ENCODE measurements at regions of chrX and their contacts with region 1.

Region 1: DNA sequence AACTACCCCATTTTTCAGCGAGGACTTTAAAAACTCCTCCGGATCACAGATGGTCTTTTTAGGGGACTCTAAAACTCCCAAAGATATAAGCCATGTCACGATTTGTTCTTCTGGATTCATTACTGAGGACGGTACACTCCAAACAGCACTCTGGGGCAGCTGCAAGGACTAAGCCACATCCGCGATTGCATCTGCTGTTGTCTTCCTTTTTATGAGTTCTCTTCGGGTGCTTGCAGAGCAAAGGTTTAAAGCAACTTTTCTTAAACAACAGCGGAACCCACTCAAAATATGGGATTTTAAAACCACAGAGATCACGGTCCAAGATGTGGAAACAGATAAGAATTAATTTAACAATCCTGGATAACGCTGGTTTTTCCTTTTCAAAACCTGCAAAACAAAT is at the start of gene ARHGEF6:
- DNase-seq: peak; percentile 9
- H3K4me3 Mint-ChIP-seq: peak within 1 kb of the TSS; percentile 93
- H3K27ac Mint-ChIP-seq: peak within 1 kb of the TSS; percentile 95
- H3K4me1 Mint-ChIP-seq: peaks cover 64% of the 10 kb centered on the region
- H3K27me3 Mint-ChIP-seq: no peaks in the 10 kb centered on the region
- total RNA-seq, gene ARHGEF6: 39.8 and 40.8 TPM in 2 replicates

Region 2: GRCh38 chrX:136711147-136711546 is 69.6 kb before region 1 on chrX:
- intact Hi-C with region 1: loop called (anchors 1 kb)
- DNase-seq: no peak
- H3K4me3 Mint-ChIP-seq: no peak overlapping the region
- H3K27ac Mint-ChIP-seq: peak overlapping the region; percentile 91
- H3K4me1 Mint-ChIP-seq: peaks cover 51% of the 10 kb centered on the region
- H3K27me3 Mint-ChIP-seq: no peaks in the 10 kb centered on the region

Region 3: DNA sequence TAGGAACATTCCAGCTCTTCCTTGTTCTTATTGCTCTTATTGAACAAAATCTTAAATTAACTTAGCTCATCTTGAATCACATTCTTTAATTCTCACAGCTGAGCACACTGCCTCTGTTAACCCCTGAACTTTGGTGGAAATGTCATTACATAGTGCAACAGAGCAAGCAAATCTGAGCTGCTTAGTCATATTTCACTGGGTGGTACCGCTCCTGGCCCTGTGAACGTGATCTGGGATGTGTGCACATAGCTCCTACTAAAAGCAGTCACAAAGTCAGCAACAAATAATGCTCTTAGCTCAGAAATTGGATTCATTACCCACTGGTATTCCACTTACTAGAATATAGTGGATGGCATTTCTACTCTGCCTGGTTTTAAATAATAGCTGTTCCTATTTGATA is 28.0 kb before region 1 on chrX:
- intact Hi-C with region 1: loop called (anchors 2 kb)
- DNase-seq: no peak
- H3K4me3 Mint-ChIP-seq: no peak overlapping the region
- H3K27ac Mint-ChIP-seq: no peak overlapping the region
- H3K4me1 Mint-ChIP-seq: peaks cover 64% of the 10 kb centered on the region
- H3K27me3 Mint-ChIP-seq: no peaks in the 10 kb centered on the region

Region 4: DNA sequence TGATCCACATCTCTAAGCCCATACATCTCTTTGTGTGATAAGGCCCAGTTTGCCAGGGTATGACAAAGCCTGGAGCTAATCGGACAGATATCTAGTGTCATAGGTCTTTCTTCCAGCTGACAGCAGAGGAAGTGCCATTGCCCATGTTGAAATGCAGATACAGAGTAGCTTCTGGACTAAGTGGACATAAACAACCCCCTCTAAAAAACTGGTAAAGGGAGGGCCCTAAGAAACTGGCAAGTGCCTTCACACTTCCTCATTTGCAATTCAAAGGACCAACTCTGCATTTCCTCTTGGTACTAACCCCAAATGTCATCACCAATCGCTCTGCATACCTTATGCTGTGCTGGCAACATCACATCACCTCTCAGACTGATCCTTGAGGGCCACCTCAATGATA is 20.8 kb before region 1 on chrX:
- intact Hi-C with region 1: loop called (anchors 2 kb)
- DNase-seq: no peak
- H3K4me3 Mint-ChIP-seq: no peak overlapping the region
- H3K27ac Mint-ChIP-seq: no peak overlapping the region
- H3K4me1 Mint-ChIP-seq: peaks cover 41% of the 10 kb centered on the region
- H3K27me3 Mint-ChIP-seq: no peaks in the 10 kb centered on the region

Region 5: GRCh38 chrX:136767104-136767941 is 13.4 kb before region 1 on chrX:
- intact Hi-C with region 1: loop called (anchors 1 kb)
- DNase-seq: peak; percentile 17
- H3K4me3 Mint-ChIP-seq: peak overlapping the region; percentile 80
- H3K27ac Mint-ChIP-seq: peak overlapping the region; percentile 92
- H3K4me1 Mint-ChIP-seq: peaks cover 56% of the 10 kb centered on the region
- H3K27me3 Mint-ChIP-seq: no peaks in the 10 kb centered on the region

Region 6: GRCh38 chrX:136797787-136798186 is 17.0 kb after region 1 on chrX:
- intact Hi-C with region 1: no loop called
- DNase-seq: no peak
- H3K4me3 Mint-ChIP-seq: no peak overlapping the region
- H3K27ac Mint-ChIP-seq: peak overlapping the region; percentile 11
- H3K4me1 Mint-ChIP-seq: peaks cover 7% of the 10 kb centered on the region
- H3K27me3 Mint-ChIP-seq: no peaks in the 10 kb centered on the region

Region 7: GRCh38 chrX:136810493-136810892 is 29.7 kb after region 1 on chrX:
- intact Hi-C with region 1: loop called (anchors 2 kb)
- DNase-seq: peak; percentile 2
- H3K4me3 Mint-ChIP-seq: peak overlapping the region; percentile 58
- H3K27ac Mint-ChIP-seq: peak overlapping the region; percentile 77
- H3K4me1 Mint-ChIP-seq: peaks cover 8% of the 10 kb centered on the region
- H3K27me3 Mint-ChIP-seq: no peaks in the 10 kb centered on the region

Region 8: GRCh38 chrX:136866337-136867095 is 85.8 kb after region 1 on chrX:
- intact Hi-C with region 1: loop called (anchors 5 kb)
- DNase-seq: no peak
- H3K4me3 Mint-ChIP-seq: no peak overlapping the region
- H3K27ac Mint-ChIP-seq: peak overlapping the region; percentile 79
- H3K4me1 Mint-ChIP-seq: peaks cover 33% of the 10 kb centered on the region
- H3K27me3 Mint-ChIP-seq: no peaks in the 10 kb centered on the region

Region 9: DNA sequence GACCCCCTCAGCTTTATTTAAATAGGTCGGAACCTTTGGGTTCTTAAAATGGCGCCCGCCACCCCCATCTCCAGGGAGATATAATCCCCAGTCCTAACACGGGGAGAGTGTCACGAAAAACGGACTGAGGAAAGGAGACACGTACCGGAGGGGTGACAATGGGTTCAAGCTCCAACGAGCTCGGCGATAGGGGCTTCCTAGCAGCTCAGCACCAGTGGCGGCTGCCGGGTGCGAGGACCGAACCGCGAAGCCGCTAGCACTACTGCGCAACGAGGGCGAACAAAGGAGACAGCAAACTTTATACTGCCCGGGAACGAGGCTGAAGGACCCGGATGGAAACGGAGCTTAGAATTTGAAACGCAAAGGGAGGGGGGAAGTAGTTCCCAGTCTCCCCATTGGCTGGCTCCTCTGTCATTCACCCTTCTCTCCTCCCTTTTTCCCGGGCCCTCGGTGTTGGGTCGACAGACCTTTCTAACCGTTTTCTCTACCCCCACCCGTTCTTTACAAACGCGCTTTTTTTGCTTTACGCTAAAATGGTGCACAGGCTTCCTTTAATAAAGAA is 99.8 kb after region 1 on chrX and contains the start of gene RBMX:
- intact Hi-C with region 1: no loop called
- DNase-seq: peak; percentile 84
- H3K4me3 Mint-ChIP-seq: peak within 1 kb of the TSS; percentile 98
- H3K27ac Mint-ChIP-seq: peak within 1 kb of the TSS; percentile 99
- H3K4me1 Mint-ChIP-seq: peaks cover 6% of the 10 kb centered on the region
- H3K27me3 Mint-ChIP-seq: no peaks in the 10 kb centered on the region
- total RNA-seq, gene RBMX: 308 and 327 TPM in 2 replicates

Measured in activated T-helper 1 cell treated with anti-CD3 and anti-CD28 coated beads, Interleukin-12 subunit alpha, Interleukin-12 subunit beta, Interleukin-2, Interleukin-4 antibody, amounts not matched to agents 30 ng/mL and 10 ng/mL and 1 ng/mL, durations not matched to agents 14 hours and 24 hours and 36 hours (primary cell).